CD4-positive, alpha-beta T cell (primary cell): ENCODE measurements at regions of chr17 and their contacts with region 1.

Region 1: DNA sequence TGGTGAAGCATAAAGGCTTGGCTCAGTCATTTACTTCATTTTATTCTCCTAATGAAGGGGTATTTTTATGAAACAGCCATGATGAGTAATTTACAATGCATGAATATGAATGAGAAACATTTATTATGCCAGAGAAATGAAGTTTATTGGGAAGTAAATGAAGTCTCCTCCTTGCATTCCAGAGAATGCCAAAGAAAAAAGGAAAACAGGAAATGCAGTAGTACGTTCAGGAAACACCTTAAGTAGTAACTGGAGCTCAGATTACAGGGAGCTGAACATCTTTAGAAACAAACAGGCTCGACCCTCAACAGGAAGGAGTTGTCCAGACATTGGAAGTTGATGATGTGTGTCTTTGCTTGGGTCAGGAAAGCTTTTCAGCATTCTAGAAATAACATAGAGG is 4.6 kb downstream of the KRT34 start:
- DNase-seq: no peak
- ATAC-seq: no peak
- H3K4me3 ChIP-seq: no peak overlapping the region
- H3K4me3 Mint-ChIP-seq: no peak overlapping the region
- H3K27ac ChIP-seq: no peak overlapping the region
- H3K27ac Mint-ChIP-seq: no peak overlapping the region
- H3K4me1 ChIP-seq: peaks cover 4% of the 10 kb centered on the region
- H3K4me1 Mint-ChIP-seq: peaks cover 27% of the 10 kb centered on the region
- H3K27me3 ChIP-seq: no peaks in the 10 kb centered on the region
- H3K27me3 Mint-ChIP-seq: no peaks in the 10 kb centered on the region
- CTCF ChIP-seq: no peak

Region 2: DNA sequence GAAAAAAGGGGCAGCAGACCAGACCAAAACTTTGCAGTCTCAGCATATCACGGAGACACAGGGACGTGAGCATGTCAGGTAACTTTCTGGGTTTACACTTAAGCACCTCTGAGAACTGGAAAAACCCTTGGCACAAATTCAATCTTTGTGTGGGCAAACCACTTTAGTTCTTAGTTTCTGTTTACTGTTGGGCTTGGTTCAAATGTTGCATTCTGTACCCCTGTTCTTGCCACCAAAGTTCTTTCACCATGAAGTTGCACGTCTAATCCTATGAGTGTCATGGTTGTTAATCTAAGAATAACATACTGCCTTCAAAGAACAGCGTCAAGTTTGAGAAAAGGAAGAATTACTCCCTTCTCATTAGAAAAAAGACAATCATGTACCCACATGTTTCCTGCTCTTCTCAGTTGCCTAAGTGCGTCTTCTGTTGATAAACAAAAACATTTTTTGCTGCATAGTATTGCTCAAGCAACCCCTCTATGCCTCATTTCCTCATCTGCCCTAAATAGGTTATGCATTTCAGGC is 38.5 kb before region 1 on chr17:
- CTCF ChIA-PET with region 1: no interaction called
- POLR2A ChIA-PET with region 1: no interaction called
- intact Hi-C with region 1: loop called in 1 of 2 experiments (anchors 5 kb)
- DNase-seq: peak in 8 of 14 experiments; percentile 25 to 93 (median 52)
- ATAC-seq: peak; percentile 83
- H3K4me3 ChIP-seq: no peak overlapping the region
- H3K4me3 Mint-ChIP-seq: peak overlapping the region; percentile 23
- H3K27ac ChIP-seq: peak overlapping the region; percentile 87 to 88
- H3K27ac Mint-ChIP-seq: peak overlapping the region; percentile 94
- H3K4me1 ChIP-seq: peaks cover 88% of the 10 kb centered on the region
- H3K4me1 Mint-ChIP-seq: peaks cover 88% of the 10 kb centered on the region
- H3K27me3 ChIP-seq: no peaks in the 10 kb centered on the region
- H3K27me3 Mint-ChIP-seq: no peaks in the 10 kb centered on the region
- CTCF ChIP-seq: no peak

Region 3: GRCh38 chr17:41665566-41666236 is 288.2 kb after region 1 on chr17:
- CTCF ChIA-PET with region 1: no interaction called
- POLR2A ChIA-PET with region 1: no interaction called
- intact Hi-C with region 1: no loop called
- DNase-seq: peak; percentile 75 to 95 (median 88)
- ATAC-seq: peak; percentile 80
- H3K4me3 ChIP-seq: peak overlapping the region; percentile 58
- H3K4me3 Mint-ChIP-seq: peak overlapping the region; percentile 87
- H3K27ac ChIP-seq: peak overlapping the region; percentile 98 to 99
- H3K27ac Mint-ChIP-seq: peak overlapping the region; percentile 90
- H3K4me1 ChIP-seq: peaks cover 42% of the 10 kb centered on the region
- H3K4me1 Mint-ChIP-seq: peaks cover 41% of the 10 kb centered on the region
- H3K27me3 ChIP-seq: no peaks in the 10 kb centered on the region
- H3K27me3 Mint-ChIP-seq: no peaks in the 10 kb centered on the region
- CTCF ChIP-seq: peak; percentile 99